Activated T-helper 1 cell treated with anti-CD3 and anti-CD28 coated beads, Interleukin-12 subunit alpha, Interleukin-12 subunit beta, Interleukin-2, Interleukin-4 antibody, amounts not matched to agents 30 ng/mL and 10 ng/mL and 1 ng/mL, durations not matched to agents 14 hours and 24 hours and 36 hours (primary cell): ENCODE measurements at regions of chr4 and their contacts with region 1.

Region 1: GRCh38 chr4:39458505-39459300 is at the starts of genes LIAS and RPL9:
- DNase-seq: peak; percentile 93
- H3K4me3 Mint-ChIP-seq: peak within 1 kb of the TSS; percentile 99
- H3K27ac Mint-ChIP-seq: peak within 1 kb of the TSS; percentile 99
- H3K4me1 Mint-ChIP-seq: peaks cover 49% of the 10 kb centered on the region
- H3K27me3 Mint-ChIP-seq: no peaks in the 10 kb centered on the region
- total RNA-seq, gene LIAS: 28.6 and 29.7 TPM in 2 replicates
- total RNA-seq, gene RPL9: 1,540 and 1,586 TPM in 2 replicates

Region 2: GRCh38 chr4:37891260-37892159 is 1567.2 kb before region 1 on chr4:
- intact Hi-C with region 1: loop called (anchors 5 kb)
- DNase-seq: peak; percentile 53
- H3K4me3 Mint-ChIP-seq: peak overlapping the region; percentile 93
- H3K27ac Mint-ChIP-seq: peak overlapping the region; percentile 95
- H3K4me1 Mint-ChIP-seq: peaks cover 48% of the 10 kb centered on the region
- H3K27me3 Mint-ChIP-seq: peaks cover 19% of the 10 kb centered on the region

Region 3: DNA sequence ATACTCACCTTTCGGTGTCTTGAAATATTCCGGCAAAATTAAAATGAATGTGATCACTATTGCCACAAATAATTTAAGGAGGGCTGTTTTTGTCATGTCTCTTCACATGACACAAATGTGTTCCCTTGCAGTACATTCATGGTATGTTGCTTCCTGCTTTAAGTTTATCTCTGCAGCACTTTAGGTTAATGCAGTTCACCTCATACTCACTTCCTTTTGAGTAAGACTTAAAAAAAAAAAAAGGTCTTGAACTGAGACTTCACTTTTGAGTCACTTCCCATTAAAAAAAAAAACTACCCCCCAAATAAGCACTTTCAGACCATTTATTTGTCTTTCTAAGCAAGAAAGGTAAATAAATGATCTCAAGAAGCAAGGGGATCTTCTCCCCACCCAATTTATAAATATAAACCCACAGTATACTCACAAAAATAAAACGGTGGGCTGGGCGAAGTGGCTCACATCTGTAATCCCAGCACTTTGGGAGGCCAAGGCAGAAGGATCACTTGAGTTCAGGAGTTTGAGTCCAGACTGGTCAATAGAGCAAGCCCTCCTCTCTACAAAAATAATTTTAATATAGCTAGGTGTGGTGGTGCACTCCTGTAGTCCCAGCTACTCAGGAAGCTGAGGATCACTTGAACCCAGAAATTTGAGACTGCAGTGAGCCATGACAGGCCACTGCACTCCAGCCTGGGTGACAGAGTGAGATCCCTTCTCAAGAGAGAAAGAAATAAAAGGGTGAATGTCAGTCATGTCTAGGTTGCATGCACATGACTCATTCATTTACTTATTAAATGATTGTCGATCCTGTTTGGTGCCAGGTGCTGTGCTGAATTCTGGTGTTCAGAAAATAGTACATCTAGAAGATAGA is 426.3 kb before region 1 on chr4 and contains the start of gene TMEM156:
- intact Hi-C with region 1: loop called (anchors 5 kb)
- DNase-seq: no peak
- H3K4me3 Mint-ChIP-seq: peak within 1 kb of the TSS; percentile 93
- H3K27ac Mint-ChIP-seq: peak within 1 kb of the TSS; percentile 87
- H3K4me1 Mint-ChIP-seq: peaks cover 46% of the 10 kb centered on the region
- H3K27me3 Mint-ChIP-seq: no peaks in the 10 kb centered on the region
- total RNA-seq, gene TMEM156: 27.7 and 29.4 TPM in 2 replicates

Region 4: GRCh38 chr4:39285111-39285795 is 173.4 kb before region 1 on chr4:
- intact Hi-C with region 1: loop called (anchors 5 kb)
- DNase-seq: no peak
- H3K4me3 Mint-ChIP-seq: no peak overlapping the region
- H3K27ac Mint-ChIP-seq: no peak overlapping the region
- H3K4me1 Mint-ChIP-seq: peaks cover 22% of the 10 kb centered on the region
- H3K27me3 Mint-ChIP-seq: no peaks in the 10 kb centered on the region

Region 5: GRCh38 chr4:39365830-39366771 is 92.6 kb before region 1 on chr4 and contains the start of gene RFC1:
- intact Hi-C with region 1: loop called (anchors 1 kb)
- DNase-seq: peak; percentile 89
- H3K4me3 Mint-ChIP-seq: peak within 1 kb of the TSS; percentile 95
- H3K27ac Mint-ChIP-seq: peak within 1 kb of the TSS; percentile 94
- H3K4me1 Mint-ChIP-seq: peaks cover 26% of the 10 kb centered on the region
- H3K27me3 Mint-ChIP-seq: no peaks in the 10 kb centered on the region
- total RNA-seq, gene RFC1: 83.3 and 87.1 TPM in 2 replicates

Region 6: DNA sequence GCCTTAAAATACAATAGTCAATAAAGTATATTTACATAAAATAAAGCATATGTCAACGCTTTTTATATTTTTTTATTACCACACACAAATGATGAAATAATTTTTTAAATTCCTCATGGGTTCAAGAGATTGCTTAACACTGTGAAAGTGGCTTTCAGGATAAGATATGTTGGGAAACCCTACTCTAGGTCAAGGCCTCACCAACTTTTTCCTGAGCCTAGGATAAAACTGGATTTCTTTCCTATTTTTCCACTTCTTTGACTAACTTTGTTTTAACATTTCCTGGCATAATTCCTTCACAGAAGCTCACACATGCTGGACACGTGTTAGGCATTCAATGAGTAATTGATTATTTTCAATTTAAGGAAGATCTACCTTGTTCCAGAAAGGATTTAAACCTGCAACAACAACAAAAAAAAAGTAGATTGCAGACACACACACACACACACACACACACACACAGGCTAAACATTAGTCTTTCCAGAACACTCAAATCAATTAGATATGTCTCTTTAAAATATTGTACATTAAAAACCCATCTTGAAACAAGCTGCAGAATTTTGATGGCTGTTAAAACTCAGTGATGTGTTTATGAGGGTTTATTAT is 42.9 kb before region 1 on chr4:
- intact Hi-C with region 1: no loop called
- DNase-seq: no peak
- H3K4me3 Mint-ChIP-seq: no peak overlapping the region
- H3K27ac Mint-ChIP-seq: no peak overlapping the region
- H3K4me1 Mint-ChIP-seq: no peaks in the 10 kb centered on the region
- H3K27me3 Mint-ChIP-seq: peaks cover 6% of the 10 kb centered on the region

Region 7: DNA sequence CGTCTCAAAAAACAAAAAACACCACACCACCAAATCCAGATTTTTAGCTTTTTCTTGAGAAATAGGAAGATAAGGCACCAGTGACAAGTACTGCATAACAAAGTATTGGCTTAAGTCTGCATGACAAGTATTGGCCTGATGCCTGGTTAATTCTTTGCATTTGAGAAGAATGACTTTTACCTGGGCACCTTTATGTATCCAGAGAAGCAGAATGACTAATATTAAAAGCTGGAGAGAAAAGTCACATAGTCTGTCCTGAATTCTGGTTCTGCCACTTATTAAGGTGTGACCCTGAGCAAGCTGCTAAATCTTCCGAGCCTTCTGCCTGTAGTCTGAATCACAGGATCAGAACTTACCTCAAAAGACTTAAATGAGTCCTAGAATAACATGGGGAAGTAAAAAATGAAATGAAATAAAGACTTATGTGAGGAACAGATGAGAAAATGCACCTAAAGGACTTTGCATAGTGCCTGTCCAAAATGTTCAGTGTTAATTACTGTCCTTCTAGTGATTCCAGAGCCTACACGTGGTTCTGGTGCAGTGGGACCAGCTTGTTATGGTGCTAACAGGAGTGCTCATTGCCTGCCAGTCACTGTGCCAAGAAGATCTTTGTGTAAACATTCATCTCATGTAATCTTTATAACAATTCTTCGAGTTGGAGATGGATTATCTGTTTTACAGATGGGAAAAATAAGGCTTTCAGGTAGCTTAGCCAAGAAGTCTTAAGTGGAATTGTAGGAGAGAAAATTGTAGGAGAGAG is 36.9 kb after region 1 on chr4:
- intact Hi-C with region 1: no loop called
- DNase-seq: no peak
- H3K4me3 Mint-ChIP-seq: no peak overlapping the region
- H3K27ac Mint-ChIP-seq: no peak overlapping the region
- H3K4me1 Mint-ChIP-seq: no peaks in the 10 kb centered on the region
- H3K27me3 Mint-ChIP-seq: no peaks in the 10 kb centered on the region

Region 8: GRCh38 chr4:39565878-39566600 is 107.3 kb after region 1 on chr4:
- intact Hi-C with region 1: no loop called
- DNase-seq: no peak
- H3K4me3 Mint-ChIP-seq: no peak overlapping the region
- H3K27ac Mint-ChIP-seq: no peak overlapping the region
- H3K4me1 Mint-ChIP-seq: no peaks in the 10 kb centered on the region
- H3K27me3 Mint-ChIP-seq: no peaks in the 10 kb centered on the region

Region 9: GRCh38 chr4:39638354-39639240 is 179.9 kb after region 1 on chr4 and contains the start of gene SMIM14:
- intact Hi-C with region 1: loop called (anchors 2 kb)
- DNase-seq: peak; percentile 89
- H3K4me3 Mint-ChIP-seq: peak within 1 kb of the TSS; percentile 87
- H3K27ac Mint-ChIP-seq: peak within 1 kb of the TSS; percentile 83
- H3K4me1 Mint-ChIP-seq: peaks cover 22% of the 10 kb centered on the region
- H3K27me3 Mint-ChIP-seq: peaks cover 24% of the 10 kb centered on the region
- total RNA-seq, gene SMIM14: 0.76 and 1.6 TPM in 2 replicates

Region 10: GRCh38 chr4:40316782-40317635 is 858.3 kb after region 1 on chr4:
- intact Hi-C with region 1: loop called (anchors 2 kb)
- DNase-seq: peak; percentile 59
- H3K4me3 Mint-ChIP-seq: peak overlapping the region; percentile 83
- H3K27ac Mint-ChIP-seq: peak overlapping the region; percentile 99
- H3K4me1 Mint-ChIP-seq: peaks cover 58% of the 10 kb centered on the region
- H3K27me3 Mint-ChIP-seq: no peaks in the 10 kb centered on the region